OCI-LY7 (cell line): ENCODE measurements at regions of chr4 and their contacts with region 1.

Region 1: DNA sequence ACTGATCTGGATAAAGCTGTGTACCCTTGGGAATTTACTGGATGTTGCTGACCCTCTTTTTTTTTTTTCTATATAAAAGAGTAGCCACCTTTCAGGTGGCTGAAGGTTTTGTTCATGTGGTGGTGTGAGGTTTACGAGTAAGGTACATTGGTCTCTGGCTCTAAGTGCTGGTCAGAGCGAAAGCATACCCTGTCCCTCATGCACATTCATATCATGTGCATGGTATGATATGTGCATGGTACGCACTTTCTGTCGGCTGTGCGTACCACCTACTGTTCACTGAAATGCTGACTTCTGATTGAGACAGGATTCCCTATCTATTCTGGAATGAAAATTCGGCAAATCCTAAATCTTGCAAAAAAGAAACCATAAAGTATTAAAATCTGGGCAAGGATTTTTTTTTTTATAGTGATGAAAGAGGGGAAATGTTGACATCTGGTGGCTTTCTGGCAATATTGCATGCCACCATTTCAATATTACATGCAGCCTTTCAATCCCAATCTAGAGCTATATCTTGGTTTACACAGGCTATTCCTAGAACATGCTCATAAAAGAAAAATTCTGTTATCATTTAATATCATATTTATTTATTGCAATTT is 32.8 kb downstream of the FAM149A start:
- DNase-seq: peak; percentile 33
- H3K4me3 ChIP-seq: no peak overlapping the region
- H3K27ac ChIP-seq: no peak overlapping the region
- H3K4me1 ChIP-seq: no peaks in the 10 kb centered on the region
- CTCF ChIP-seq: peak; percentile 84

Region 2: GRCh38 chr4:185716577-185717376 is 420.5 kb before region 1 on chr4:
- CTCF ChIA-PET with region 1: no interaction called
- POLR2A ChIA-PET with region 1: no interaction called
- intact Hi-C with region 1: no loop called
- DNase-seq: no peak
- H3K4me3 ChIP-seq: no peak overlapping the region
- H3K27ac ChIP-seq: no peak overlapping the region
- H3K4me1 ChIP-seq: no peaks in the 10 kb centered on the region
- CTCF ChIP-seq: no peak

Region 3: GRCh38 chr4:186067757-186068385 is 69.4 kb before region 1 on chr4:
- CTCF ChIA-PET with region 1: no interaction called
- POLR2A ChIA-PET with region 1: no interaction called
- intact Hi-C with region 1: loop called (anchors 2 kb)
- DNase-seq: peak; percentile 62
- H3K4me3 ChIP-seq: no peak overlapping the region
- H3K27ac ChIP-seq: no peak overlapping the region
- H3K4me1 ChIP-seq: no peaks in the 10 kb centered on the region
- CTCF ChIP-seq: peak; percentile 69

Region 4: GRCh38 chr4:186228514-186228894 is 91.2 kb after region 1 on chr4:
- CTCF ChIA-PET with region 1: no interaction called
- POLR2A ChIA-PET with region 1: no interaction called
- intact Hi-C with region 1: no loop called
- DNase-seq: no peak
- H3K4me3 ChIP-seq: no peak overlapping the region
- H3K27ac ChIP-seq: no peak overlapping the region
- H3K4me1 ChIP-seq: no peaks in the 10 kb centered on the region
- CTCF ChIP-seq: no peak